Caki2 (cell line): ENCODE measurements at regions of chr17 and their contacts with region 1.

Region 1: GRCh38 chr17:48883171-48883570 is 9.4 kb upstream of the ATP5MC1 start:
- DNase-seq: peak; percentile 43

Region 2: DNA sequence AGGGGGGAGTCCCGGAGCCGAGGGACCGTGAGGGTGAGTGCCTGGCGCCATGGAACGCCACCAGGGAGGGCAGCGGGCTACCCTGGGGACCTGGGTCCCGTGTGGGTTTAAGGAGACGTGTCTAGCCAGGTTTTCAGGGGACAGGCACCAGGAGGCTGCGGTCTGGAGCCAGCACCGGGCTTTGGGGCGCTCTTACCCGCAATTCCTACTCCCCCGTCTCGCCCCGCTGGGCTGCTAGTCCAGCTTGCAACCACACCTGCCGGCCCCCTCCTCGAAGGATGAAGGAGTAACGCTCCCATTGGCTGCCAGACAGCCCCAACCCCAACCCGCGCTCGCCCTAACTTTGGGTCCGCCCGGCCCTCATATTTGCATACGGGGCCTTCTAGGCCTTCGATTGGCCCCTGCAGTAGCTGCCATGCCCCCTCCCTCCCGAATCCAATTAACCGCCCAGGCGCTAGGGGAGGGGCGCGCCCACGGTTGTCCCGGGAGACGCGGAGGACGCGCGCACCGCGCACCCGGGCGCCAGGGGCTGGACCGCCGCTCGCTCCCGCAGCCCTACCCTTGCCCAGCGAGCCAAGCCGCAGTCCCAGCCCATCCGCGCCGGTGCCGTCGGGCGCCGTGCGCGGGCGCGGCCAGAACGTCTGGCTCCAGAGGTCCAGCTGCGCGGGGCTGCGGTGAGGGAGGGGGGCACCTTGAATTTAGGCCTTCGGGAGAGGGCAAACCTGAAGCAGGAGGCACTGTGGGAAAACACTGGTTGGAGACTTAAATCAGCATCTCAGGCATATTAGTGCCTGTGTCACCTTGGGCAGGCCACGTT is 66.2 kb before region 1 on chr17 and contains the start of gene TTLL6:
- in situ Hi-C with region 1: loop called (anchors 10 kb)
- DNase-seq: peak; percentile 97
- total RNA-seq, gene TTLL6: 0.34 TPM in 1 of 2 replicates, not detected in the other

Region 3: DNA sequence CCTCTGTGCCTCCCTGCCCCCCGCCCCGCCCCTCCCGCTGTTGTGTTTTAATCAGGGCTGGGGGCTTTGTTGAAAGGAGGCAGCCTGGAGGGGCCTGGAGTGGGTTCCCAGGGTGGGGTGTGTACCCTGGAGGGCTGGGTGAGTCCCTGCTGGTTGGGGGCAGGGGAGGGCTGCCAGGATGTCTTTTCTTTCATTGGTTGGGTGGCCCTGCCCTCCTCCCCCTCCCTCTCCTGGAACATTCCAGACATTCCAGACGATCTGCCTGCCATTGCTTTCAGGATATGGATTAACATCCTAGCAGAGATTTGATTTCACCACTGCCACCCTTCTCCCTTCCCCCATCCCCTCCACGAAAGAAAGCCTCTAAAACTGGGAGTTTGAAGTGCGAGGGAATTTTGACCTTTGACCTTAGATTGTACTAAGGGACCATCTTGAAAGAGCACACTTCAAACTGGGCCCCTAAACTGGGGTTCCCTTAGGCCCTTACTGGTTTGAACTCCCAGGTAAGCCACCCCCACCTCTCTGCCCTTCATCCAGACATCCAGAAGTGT is 139.3 kb after region 1 on chr17:
- in situ Hi-C with region 1: no loop called
- DNase-seq: peak; percentile 54